A549 (cell line): ENCODE measurements at regions of chr15 and their contacts with region 1.

Region 1: DNA sequence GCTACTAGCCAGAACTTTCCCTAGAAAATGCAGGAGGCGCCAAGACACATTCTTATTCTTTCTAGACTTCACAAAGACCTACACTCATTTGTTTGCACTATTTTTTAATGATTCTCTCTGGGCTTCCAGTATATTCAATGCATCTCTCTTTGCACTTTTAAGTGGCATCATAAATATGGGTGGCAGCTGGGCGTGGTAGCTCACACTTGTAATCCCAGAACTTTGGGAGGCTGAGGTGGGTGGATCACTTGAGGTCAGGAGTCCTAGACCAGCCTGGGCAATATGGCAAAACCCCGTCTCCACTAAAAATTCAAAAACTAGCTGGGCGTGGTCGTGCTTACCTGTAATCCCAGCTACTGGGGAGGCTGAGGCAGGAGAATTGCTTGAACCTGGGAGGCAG is 5.6 kb upstream of the GCNT3 start:
- DNase-seq: no peak
- ATAC-seq: no peak
- H3K4me3 ChIP-seq: no peak overlapping the region
- H3K27ac ChIP-seq: no peak overlapping the region
- H3K4me1 ChIP-seq: no peaks in the 10 kb centered on the region
- CTCF ChIP-seq: no peak
- EP300 ChIP-seq: no peak
- POLR2A ChIP-seq: no peak
- RAD21 ChIP-seq: no peak

Region 2: GRCh38 chr15:59138243-59138642 is 467.8 kb before region 1 on chr15:
- CTCF ChIA-PET with region 1: no interaction called
- POLR2A ChIA-PET with region 1: no interaction called
- DNase-seq: peak; percentile 83 to 86
- ATAC-seq: peak; percentile 90
- H3K4me3 ChIP-seq: no peak overlapping the region
- H3K27ac ChIP-seq: no peak overlapping the region
- H3K4me1 ChIP-seq: peaks cover 14% of the 10 kb centered on the region; the same call in 2 of the 3 replicates
- CTCF ChIP-seq: peak; percentile 83
- EP300 ChIP-seq: no peak
- POLR2A ChIP-seq: no peak
- RAD21 ChIP-seq: peak; percentile 58 to 59

Region 3: GRCh38 chr15:59594493-59594942 is 11.5 kb before region 1 on chr15:
- CTCF ChIA-PET with region 1: interaction called, 25 read pairs
- POLR2A ChIA-PET with region 1: interaction called, 57 read pairs
- DNase-seq: peak; percentile 97 to 98
- ATAC-seq: peak; percentile 94 to 95
- H3K4me3 ChIP-seq: no peak overlapping the region
- H3K27ac ChIP-seq: peak overlapping the region; percentile 86 to 92
- H3K4me1 ChIP-seq: peaks cover 40% of the 10 kb centered on the region
- CTCF ChIP-seq: no peak
- EP300 ChIP-seq: peak in 1 of 2 experiments; percentile 47; a peak in 1 of 5 replicates
- POLR2A ChIP-seq: no peak
- RAD21 ChIP-seq: peak; percentile 15 to 42; a peak in 3 of 5 replicates